AG04450 (cell line): ENCODE measurements at regions of chr2 and their contacts with region 1.

Region 1: DNA sequence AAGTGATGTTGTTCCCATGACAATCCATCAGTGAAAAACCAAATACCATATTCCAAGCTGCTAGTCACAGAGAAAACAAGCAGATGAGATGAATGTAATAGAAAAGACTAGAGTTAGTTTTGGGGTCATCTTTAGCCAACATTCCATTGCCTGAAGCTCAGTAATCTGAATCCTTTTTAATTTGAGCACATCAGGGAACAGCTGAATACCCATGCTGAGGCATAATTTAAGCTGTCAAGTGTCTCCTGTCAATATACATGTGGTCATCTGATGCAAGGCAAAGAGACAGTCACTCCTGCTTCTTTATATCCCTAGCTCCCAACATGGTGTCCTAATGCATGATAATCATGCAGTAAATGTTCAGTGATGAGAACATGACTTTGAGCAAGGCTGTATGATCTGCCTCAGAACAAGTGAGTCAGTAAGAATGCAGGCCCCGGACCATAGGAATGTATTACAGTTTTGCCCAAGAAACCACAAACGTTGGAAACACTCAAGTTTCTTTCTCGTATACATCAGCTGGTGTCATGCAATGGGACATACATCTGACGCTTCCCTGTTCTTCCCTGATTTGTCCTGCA is 48.0 kb downstream of the CDK15 start:
- DNase-seq: peak; percentile 93
- H3K4me3 ChIP-seq: peak overlapping the region; percentile 24
- H3K27ac ChIP-seq: peak overlapping the region; percentile 97
- H3K27me3 ChIP-seq: no peaks in the 10 kb centered on the region
- CTCF ChIP-seq: no peak

Region 2: GRCh38 chr2:201795607-201796477 is 58.5 kb before region 1 on chr2:
- CTCF ChIA-PET with region 1: interaction called, 14 read pairs
- POLR2A ChIA-PET with region 1: interaction called, 12 read pairs
- DNase-seq: no peak
- H3K4me3 ChIP-seq: no peak overlapping the region
- H3K27ac ChIP-seq: no peak overlapping the region
- H3K27me3 ChIP-seq: no peaks in the 10 kb centered on the region
- CTCF ChIP-seq: peak; percentile 88

Region 3: GRCh38 chr2:201837824-201838431 is 16.4 kb before region 1 on chr2:
- CTCF ChIA-PET with region 1: no interaction called
- POLR2A ChIA-PET with region 1: interaction called, 15 read pairs
- DNase-seq: no peak
- H3K4me3 ChIP-seq: no peak overlapping the region
- H3K27ac ChIP-seq: no peak overlapping the region
- H3K27me3 ChIP-seq: no peaks in the 10 kb centered on the region
- CTCF ChIP-seq: no peak

Region 4: DNA sequence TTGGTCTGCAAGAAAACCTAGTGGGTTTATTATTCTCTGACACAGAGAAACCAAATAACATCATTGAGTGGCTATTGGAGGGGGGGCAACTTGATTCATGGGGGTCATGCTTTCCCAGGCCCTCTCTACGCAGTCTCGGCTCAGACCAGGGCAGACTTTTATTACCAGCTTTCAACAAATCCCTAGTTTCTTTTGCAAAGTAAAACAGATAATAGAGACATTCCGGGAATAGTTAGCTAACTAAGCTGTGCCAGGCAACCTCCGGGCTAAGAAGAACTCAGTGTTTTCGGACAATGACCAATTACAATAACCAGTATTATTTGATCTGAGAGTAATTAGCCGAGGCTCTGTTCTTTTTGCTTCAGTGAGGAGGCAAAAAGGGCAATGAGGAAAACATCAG is 18.3 kb after region 1 on chr2:
- CTCF ChIA-PET with region 1: interaction called, 3 read pairs
- POLR2A ChIA-PET with region 1: interaction called, 13 read pairs
- DNase-seq: no peak
- H3K4me3 ChIP-seq: no peak overlapping the region
- H3K27ac ChIP-seq: no peak overlapping the region
- H3K27me3 ChIP-seq: no peaks in the 10 kb centered on the region
- CTCF ChIP-seq: no peak